ENCODE measurements at regions of chr5 and their contacts with region 1.

Region 1: DNA sequence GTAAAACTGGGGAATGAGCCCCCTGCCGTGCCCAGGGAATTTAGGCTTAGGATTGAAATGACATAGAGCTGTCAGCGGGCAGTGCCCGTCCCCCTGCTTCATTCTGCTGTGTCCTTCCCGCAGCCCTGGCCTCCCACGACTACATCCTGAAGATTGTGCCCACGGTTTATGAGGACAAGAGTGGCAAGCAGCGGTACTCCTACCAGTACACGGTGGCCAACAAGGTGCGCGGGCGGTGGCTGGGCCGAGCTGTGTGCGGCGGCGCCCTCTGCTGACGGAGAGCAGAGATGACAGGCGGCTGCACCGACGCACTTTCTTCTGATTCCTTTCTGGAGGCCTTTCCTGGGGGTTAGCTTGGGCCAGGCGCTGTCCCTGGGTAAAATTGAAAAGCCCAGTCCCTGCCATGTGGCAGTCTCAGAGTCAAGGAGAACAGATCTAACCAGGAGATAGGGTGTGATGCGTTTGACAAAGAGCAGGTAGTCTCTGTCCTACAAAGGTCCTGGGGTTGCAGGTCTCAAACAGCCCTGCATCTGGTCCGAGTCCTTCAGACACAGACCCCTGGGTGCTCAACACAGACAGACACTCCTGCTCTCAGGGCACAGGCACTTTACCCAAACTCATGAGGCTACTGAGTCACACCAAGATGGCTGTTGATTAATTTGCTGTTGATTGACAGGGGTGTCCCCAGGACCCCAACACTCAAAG is 26.8 kb upstream of the RPL26L1 start:
- DNase-seq: peak; percentile 68 to 89 (median 82)
- H3K4me3 ChIP-seq: no peak overlapping the region
- H3K27ac ChIP-seq: peak overlapping the region in 1 of 2 donors; percentile 3
- H3K4me1 ChIP-seq: no peaks in the 10 kb centered on the region
- H3K27me3 ChIP-seq: no peaks in the 10 kb centered on the region
- CTCF ChIP-seq: peak; percentile 93

Region 2: DNA sequence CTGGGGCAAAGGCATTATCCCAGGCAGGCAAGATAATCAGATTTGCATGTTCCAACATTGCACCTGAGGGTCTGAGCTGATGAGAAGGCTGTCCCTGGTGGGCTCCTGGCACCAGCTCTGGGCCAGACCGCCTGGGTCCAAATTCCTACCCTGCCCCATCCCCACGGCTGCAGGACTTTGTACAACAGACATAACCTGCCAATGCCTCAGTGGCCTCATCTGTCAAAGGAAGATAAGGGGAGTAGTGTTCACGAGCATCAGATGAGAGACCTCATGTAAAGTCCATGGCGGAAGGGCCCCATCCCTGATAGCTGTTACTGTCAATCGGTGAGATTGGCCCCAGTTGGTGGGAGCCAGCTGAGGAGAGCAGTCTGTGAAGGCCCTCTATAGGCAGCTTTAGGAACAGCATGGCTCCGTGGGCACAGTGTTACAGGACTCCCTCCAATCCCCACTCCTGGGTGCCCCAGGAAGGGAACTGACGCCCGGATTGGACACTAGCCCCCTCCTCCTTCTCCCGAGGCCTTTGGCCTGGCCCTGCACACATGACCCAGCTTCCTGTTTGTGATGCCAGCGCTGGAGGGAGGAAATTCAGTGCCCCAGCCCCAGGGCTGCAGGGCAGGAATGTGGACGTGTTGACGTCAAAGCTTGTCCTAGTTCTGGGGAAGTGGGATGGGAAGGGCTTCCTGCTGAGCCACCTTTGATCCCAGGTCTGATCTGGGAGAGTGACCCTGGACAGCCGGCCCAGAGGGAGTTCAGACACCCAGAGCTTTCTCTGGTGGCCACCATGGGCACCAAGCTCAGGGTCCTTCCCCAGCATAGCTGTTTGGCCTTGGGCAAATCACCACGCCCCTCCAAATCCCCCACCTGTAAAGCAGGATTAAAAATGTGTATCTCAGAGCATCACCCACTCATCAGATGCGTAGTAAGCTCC is 217.7 kb before region 1 on chr5:
- intact Hi-C with region 1: loop called (anchors 5 kb)
- DNase-seq: peak; percentile 71 to 95 (median 77)
- H3K4me3 ChIP-seq: peak overlapping the region in 1 of 3 donors; percentile 18
- H3K27ac ChIP-seq: peak overlapping the region; percentile 82 to 94
- H3K4me1 ChIP-seq: peaks cover 0 to 31% (median 23%) of the 10 kb centered on the region in 3 donors
- H3K27me3 ChIP-seq: no peaks in the 10 kb centered on the region
- CTCF ChIP-seq: peak; percentile 77

Region 3: DNA sequence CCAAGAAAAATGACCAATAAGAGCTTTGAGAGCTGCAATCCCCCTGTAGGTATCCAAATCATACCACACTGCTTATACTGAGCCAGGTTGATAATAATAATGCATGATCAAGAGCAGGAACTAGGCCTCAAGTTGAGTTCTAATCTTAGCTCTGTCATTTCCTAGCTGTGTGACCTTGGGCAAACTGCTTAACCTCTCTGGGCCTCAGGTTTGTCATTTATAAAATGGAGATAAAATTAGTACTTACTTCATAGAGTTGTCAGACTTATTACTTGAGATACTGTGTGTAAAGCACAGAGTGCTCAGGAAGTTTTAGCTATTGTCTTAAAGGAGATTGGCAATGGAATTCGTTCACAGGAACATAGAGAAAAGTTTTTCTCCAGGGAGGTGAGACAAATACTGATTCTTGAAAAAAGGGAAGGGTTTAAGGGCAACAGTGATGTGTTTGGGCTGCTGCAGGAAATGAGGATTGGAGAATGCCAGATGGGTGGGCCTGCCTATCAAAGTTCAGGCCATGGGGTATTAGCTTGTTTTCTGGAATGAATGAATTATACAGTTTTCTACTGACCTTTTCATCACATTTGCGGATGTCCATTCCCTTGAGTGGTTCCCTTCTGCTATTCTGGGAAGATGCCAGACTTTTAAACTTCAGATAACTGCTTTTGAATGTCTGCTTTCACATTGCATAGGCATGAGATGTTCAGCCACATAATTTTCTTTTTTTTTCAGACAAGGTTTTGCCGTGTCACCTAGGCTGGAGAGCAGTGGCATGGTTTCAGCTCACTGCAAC is 40.9 kb after region 1 on chr5:
- intact Hi-C with region 1: no loop called
- DNase-seq: peak in 3 of 5 donors; percentile 16 to 65 (median 44)
- H3K4me3 ChIP-seq: no peak overlapping the region
- H3K27ac ChIP-seq: no peak overlapping the region
- H3K4me1 ChIP-seq: peaks cover 0 to 7% (median 3%) of the 10 kb centered on the region in 3 donors
- H3K27me3 ChIP-seq: no peaks in the 10 kb centered on the region
- CTCF ChIP-seq: no peak

Region 4: DNA sequence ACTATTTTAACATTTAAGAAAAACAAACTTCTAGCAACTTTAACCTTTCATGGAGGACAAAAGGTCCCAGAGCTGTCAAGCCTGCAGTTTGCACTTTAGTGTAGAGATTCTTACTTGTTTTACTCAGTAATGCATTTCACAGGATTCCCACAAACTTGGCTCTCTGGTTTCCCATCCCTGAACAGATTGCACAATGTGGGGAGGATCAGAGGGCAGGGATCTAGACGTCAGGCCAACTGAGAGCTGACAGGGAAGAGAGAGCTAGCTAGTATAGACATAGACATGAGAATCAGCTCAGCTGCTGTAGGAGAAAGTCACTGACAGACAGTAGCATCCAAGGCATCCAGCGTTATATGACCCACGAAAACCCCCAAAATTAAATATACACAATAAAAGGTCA is 191.0 kb after region 1 on chr5:
- intact Hi-C with region 1: no loop called
- DNase-seq: no peak
- H3K4me3 ChIP-seq: no peak overlapping the region
- H3K27ac ChIP-seq: no peak overlapping the region
- H3K4me1 ChIP-seq: no peaks in the 10 kb centered on the region
- H3K27me3 ChIP-seq: no peaks in the 10 kb centered on the region
- CTCF ChIP-seq: no peak

Region 5: DNA sequence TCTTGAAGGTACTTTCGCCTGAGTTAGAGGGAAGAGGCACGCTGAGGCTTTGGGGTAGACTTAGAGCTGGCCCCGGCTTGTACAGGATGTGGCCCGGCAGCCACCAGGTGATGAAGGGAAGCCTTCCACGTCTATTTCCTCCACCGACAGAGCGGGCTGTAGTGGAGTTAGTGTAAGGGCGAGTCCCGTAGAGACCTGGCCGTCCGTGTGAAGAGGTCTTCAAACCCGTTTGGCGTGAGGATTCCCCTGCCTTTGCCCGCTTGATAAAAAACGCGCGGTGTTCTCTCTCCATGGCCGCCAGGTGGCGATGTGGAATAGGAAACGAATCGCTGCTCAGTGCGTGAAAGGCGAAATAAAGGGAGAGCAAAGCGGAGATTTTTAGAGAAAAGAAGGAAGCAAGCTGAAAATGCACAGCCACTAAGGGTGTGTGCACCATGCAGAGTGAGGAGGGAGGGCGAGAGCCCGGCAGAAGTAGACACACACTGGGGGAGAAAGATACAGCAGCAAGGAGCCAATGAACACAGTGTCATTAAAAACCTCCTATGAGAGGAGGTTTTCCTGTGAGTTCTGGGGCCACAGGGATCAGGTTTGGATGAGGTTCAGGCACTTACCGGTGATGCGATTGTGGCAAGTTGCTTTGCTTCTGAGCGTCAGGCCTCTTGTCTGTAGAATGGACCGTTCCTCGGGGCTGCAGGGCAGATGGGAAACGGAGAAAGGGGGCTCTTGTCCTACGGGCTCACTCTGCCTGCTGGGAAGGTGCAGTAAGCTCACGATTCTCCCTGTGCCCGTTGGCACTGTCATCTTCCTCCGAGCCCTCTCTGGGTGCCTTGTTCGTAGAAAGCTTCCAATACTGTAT is 361.6 kb after region 1 on chr5:
- intact Hi-C with region 1: no loop called
- DNase-seq: peak; percentile 75 to 94 (median 85)
- H3K4me3 ChIP-seq: peak overlapping the region in 1 of 3 donors; percentile 62
- H3K27ac ChIP-seq: no peak overlapping the region
- H3K4me1 ChIP-seq: peaks cover 0 to 10% (median 6%) of the 10 kb centered on the region in 3 donors
- H3K27me3 ChIP-seq: no peaks in the 10 kb centered on the region
- CTCF ChIP-seq: peak; percentile 94

Measured in kidney (tissue), 22 donors.